Activated CD8-positive, alpha-beta T cell treated with anti-CD3 and anti-CD28 coated beads for 36 hours (primary cell): ENCODE measurements at regions of chr15 and their contacts with region 1.

Region 1: DNA sequence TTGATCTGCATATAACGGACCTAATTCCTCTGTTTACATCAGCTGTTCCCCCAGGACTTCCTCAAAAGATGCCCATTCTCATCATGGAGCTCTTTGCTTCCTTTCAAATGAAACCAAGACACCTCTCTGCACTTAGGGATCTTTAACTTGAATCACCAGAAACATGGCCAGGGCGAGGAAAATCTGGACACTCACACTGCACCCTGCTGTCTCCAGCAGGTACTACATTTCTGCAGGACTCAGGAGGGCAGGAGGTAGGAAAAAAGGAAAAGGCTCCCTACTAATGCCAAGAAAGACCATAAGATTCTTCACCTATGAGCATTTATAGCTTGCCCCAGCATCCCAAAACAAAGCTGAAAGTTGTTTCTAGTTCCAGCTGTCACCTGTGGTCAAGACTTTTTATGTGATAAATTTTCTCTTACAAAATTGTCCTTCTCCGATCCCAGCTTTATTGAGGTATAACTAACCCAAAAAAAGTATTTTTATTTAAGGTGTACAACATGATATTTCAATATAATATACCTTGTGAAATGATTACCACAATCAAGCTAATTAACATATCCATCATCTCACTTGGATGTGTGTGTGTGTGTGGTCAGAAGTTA is 87.3 kb upstream of the C15orf61 start:
- DNase-seq: peak; percentile 49
- ATAC-seq: peak; percentile 55
- H3K4me3 Mint-ChIP-seq: no peak overlapping the region
- H3K27ac Mint-ChIP-seq: no peak overlapping the region
- H3K4me1 Mint-ChIP-seq: no peaks in the 10 kb centered on the region
- H3K27me3 Mint-ChIP-seq: no peaks in the 10 kb centered on the region
- CTCF ChIP-seq: peak; percentile 90

Region 2: DNA sequence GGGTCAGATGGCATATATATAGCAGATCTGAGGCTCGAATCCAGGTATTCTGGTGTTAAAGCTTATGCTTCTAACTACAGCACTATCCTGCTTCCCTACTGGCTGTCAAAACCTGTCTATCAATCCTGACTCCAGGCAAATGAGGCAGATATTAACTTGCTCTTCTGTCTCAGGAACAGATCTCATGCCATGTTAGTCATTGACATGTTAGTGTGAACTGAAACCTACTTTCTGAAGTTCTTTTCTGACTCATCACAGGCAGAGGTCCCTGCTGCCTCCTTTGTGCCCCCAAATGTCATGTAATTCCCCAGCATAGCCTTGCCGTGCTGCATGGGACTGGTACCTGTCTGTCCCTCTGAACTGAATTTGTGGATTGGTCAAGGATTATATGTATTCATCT is 493.2 kb before region 1 on chr15:
- CTCF ChIA-PET with region 1: interaction called, 7 read pairs
- POLR2A ChIA-PET with region 1: no interaction called
- intact Hi-C with region 1: loop called (anchors 5 kb)
- DNase-seq: peak; percentile 57
- ATAC-seq: peak; percentile 95
- H3K4me3 Mint-ChIP-seq: no peak overlapping the region
- H3K27ac Mint-ChIP-seq: no peak overlapping the region
- H3K4me1 Mint-ChIP-seq: peaks cover 14% of the 10 kb centered on the region
- H3K27me3 Mint-ChIP-seq: no peaks in the 10 kb centered on the region
- CTCF ChIP-seq: no peak

Region 3: DNA sequence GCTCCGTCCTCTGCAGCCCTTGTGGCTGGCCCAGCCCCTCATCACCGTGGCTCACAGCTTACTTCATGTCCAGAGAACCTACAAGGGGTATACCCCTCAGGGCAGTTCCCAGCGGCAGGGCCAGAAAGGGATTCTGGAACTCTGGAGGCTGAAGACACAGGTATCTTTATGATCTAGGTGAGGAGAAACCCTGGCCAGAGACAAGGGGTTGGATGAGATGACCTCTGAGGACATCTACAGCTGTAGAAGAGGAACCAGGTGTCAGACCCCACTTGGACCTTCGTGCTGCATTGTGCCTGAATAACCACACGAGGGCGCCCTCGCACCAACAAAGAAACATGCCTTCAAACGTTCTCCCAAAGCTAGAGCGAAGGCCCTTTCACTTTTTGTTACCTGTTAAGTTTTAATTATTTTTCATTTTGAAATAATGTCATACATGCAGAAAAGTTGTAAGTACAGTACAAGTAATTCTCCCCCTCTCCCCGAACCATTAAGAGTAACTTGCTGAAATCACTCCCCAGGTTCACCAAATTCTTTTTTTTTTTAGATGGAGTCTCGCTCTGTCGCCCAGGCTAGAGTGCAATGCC is 486.9 kb before region 1 on chr15:
- CTCF ChIA-PET with region 1: interaction called, 25 read pairs
- POLR2A ChIA-PET with region 1: no interaction called
- intact Hi-C with region 1: loop called (anchors 5 kb)
- DNase-seq: peak; percentile 82
- ATAC-seq: peak; percentile 89
- H3K4me3 Mint-ChIP-seq: no peak overlapping the region
- H3K27ac Mint-ChIP-seq: no peak overlapping the region
- H3K4me1 Mint-ChIP-seq: peaks cover 2% of the 10 kb centered on the region
- H3K27me3 Mint-ChIP-seq: no peaks in the 10 kb centered on the region
- CTCF ChIP-seq: peak; percentile 89

Region 4: DNA sequence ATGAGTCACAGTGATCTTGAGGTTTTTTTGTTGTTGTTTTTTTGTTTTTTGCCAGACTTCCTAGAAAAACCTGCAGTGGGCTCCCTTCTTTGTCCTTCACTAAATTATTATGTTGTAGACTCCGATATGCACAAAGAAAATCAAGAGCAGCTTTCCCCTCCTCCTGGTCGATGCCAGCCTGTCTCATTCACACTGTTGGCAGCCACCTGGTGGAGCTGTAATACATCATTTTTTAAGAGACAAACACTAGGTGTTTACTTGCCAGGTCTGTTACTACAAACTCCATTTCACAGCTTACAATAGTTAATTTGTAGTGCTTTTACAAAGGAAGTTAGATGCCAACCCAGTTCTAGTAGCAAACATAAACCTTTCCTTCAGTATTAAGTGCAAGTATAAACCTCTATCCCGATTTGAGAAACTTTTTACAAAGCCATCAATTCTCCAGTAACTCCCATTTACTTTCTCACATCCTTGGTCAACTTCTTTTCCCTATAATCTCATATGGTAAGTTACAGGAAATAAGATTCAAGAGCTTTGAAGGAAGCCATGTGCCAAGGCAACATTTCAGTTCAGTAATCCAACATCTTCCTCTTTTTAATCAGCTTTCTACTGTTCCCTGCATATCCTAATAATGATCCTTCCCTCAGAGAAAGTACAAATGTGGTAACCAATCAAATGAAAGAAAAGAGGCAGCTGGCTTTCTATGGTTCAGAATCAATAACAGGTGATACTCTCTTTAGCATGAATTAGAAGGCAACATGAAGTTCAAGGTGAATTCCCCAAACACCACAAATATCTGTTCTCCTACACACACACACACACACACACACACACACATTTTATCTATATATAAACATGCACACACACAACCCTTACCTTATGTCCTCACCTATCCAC is 193.1 kb before region 1 on chr15:
- CTCF ChIA-PET with region 1: interaction called, 10 read pairs
- POLR2A ChIA-PET with region 1: no interaction called
- intact Hi-C with region 1: no loop called
- DNase-seq: peak; percentile 35
- ATAC-seq: peak; percentile 38
- H3K4me3 Mint-ChIP-seq: no peak overlapping the region
- H3K27ac Mint-ChIP-seq: peak overlapping the region; percentile 81
- H3K4me1 Mint-ChIP-seq: peaks cover 53% of the 10 kb centered on the region
- H3K27me3 Mint-ChIP-seq: no peaks in the 10 kb centered on the region
- CTCF ChIP-seq: peak; percentile 52

Region 5: DNA sequence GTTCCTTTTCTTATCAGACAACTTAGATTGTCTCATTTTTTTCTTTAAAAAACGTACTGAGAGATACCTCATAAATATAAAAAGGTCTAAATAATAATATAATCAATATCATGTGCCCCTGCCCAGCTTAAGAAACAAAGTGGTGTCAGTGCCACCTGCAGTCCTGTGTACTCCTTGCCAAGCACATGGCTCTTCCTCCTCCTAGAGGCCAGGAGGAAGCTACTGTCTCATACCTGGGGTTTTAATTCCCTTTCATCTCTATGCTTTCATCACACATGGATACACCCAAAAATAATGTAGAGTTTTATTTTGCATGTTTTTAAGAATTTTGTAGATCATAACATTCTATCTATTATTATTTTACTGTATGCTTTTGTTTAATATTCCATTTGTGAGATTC is 11.3 kb before region 1 on chr15:
- CTCF ChIA-PET with region 1: interaction called, 10 read pairs
- POLR2A ChIA-PET with region 1: no interaction called
- intact Hi-C with region 1: no loop called
- DNase-seq: no peak
- ATAC-seq: no peak
- H3K4me3 Mint-ChIP-seq: no peak overlapping the region
- H3K27ac Mint-ChIP-seq: no peak overlapping the region
- H3K4me1 Mint-ChIP-seq: no peaks in the 10 kb centered on the region
- H3K27me3 Mint-ChIP-seq: no peaks in the 10 kb centered on the region
- CTCF ChIP-seq: no peak